ENCODE measurements at regions of chr1 and their contacts with region 1.

Region 1: GRCh38 chr1:186888367-186888766 is 59.6 kb downstream of the PLA2G4A start:
- DNase-seq: peak; percentile 81
- ATAC-seq: peak; percentile 81
- H3K4me3 ChIP-seq: no peak overlapping the region
- H3K27ac ChIP-seq: peak overlapping the region; percentile 88
- H3K4me1 ChIP-seq: peaks cover 23% of the 10 kb centered on the region
- H3K27me3 ChIP-seq: no peaks in the 10 kb centered on the region
- CTCF ChIP-seq: no peak

Region 2: DNA sequence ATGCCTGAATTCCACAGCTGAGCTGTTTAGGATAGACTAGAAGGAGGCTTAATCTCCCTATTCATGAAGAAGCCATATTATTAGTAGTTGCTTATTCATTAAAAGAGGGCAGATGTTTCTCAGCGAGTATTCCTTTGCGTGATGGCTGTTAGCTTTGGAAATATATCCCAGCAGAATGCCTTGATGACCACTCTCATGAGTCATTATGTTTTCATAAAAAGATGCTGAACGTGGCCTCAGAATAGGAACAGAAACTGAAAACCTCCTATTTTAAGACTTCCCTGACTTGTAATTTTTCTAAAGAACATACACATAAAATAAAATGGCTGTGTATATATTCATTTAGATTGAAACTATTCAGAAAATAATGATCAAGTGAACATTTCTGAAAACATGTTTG is 69.2 kb before region 1 on chr1:
- CTCF ChIA-PET with region 1: no interaction called
- POLR2A ChIA-PET with region 1: no interaction called
- intact Hi-C with region 1: loop called (anchors 2 kb)
- DNase-seq: peak; percentile 13
- ATAC-seq: peak; percentile 40; the same call in 1 of the 2 replicates
- H3K4me3 ChIP-seq: no peak overlapping the region
- H3K27ac ChIP-seq: peak overlapping the region; percentile 51
- H3K4me1 ChIP-seq: peaks cover 27% of the 10 kb centered on the region
- H3K27me3 ChIP-seq: no peaks in the 10 kb centered on the region
- CTCF ChIP-seq: no peak

Measured in PC-3 (cell line).